ENCODE measurements at regions of chr3 and their contacts with region 1.

Region 1: GRCh38 chr3:186540221-186540834 is 3.9 kb downstream of the CRYGS start:
- DNase-seq: peak; percentile 90
- H3K4me3 Mint-ChIP-seq: no peak overlapping the region
- H3K27ac Mint-ChIP-seq: peak overlapping the region; percentile 25
- H3K4me1 Mint-ChIP-seq: peaks cover 57% of the 10 kb centered on the region
- H3K27me3 Mint-ChIP-seq: no peaks in the 10 kb centered on the region

Region 2: GRCh38 chr3:185983495-185984141 is 556.7 kb before region 1 on chr3:
- CTCF ChIA-PET with region 1: interaction called, 82 read pairs
- POLR2A ChIA-PET with region 1: no interaction called
- intact Hi-C with region 1: loop called (anchors 1 kb)
- DNase-seq: peak; percentile 64
- H3K4me3 Mint-ChIP-seq: no peak overlapping the region
- H3K27ac Mint-ChIP-seq: no peak overlapping the region
- H3K4me1 Mint-ChIP-seq: peaks cover 4% of the 10 kb centered on the region
- H3K27me3 Mint-ChIP-seq: peaks cover 11% of the 10 kb centered on the region

Region 3: GRCh38 chr3:186259612-186260383 is 280.5 kb before region 1 on chr3:
- CTCF ChIA-PET with region 1: interaction called, 170 read pairs
- POLR2A ChIA-PET with region 1: interaction called, 11 read pairs
- intact Hi-C with region 1: loop called (anchors 1 kb)
- DNase-seq: peak; percentile 85
- H3K4me3 Mint-ChIP-seq: peak overlapping the region; percentile 24
- H3K27ac Mint-ChIP-seq: peak overlapping the region; percentile 65
- H3K4me1 Mint-ChIP-seq: peaks cover 27% of the 10 kb centered on the region
- H3K27me3 Mint-ChIP-seq: peaks cover 6% of the 10 kb centered on the region

Region 4: DNA sequence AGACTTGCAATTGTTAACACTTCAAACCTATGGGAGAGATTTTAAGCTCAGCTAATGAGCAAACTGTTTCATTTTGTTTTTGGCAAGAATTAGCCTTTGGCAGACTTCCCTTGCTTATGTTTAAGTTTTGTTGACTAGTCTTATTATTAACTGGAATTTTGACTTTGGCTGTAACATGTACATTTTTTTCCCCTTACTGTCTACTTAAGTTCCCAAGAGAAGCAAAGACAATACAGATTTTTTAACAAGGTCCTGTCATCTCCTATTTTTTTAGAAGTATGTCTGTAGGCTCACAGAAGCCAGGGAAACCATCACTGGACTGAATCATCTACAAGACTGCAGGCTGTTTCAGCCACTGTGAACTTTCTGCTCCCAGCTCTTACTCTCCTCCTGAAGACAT is 252.6 kb before region 1 on chr3:
- CTCF ChIA-PET with region 1: no interaction called
- POLR2A ChIA-PET with region 1: no interaction called
- intact Hi-C with region 1: no loop called
- DNase-seq: no peak
- H3K4me3 Mint-ChIP-seq: no peak overlapping the region
- H3K27ac Mint-ChIP-seq: no peak overlapping the region
- H3K4me1 Mint-ChIP-seq: no peaks in the 10 kb centered on the region
- H3K27me3 Mint-ChIP-seq: peaks cover 6% of the 10 kb centered on the region

Region 5: DNA sequence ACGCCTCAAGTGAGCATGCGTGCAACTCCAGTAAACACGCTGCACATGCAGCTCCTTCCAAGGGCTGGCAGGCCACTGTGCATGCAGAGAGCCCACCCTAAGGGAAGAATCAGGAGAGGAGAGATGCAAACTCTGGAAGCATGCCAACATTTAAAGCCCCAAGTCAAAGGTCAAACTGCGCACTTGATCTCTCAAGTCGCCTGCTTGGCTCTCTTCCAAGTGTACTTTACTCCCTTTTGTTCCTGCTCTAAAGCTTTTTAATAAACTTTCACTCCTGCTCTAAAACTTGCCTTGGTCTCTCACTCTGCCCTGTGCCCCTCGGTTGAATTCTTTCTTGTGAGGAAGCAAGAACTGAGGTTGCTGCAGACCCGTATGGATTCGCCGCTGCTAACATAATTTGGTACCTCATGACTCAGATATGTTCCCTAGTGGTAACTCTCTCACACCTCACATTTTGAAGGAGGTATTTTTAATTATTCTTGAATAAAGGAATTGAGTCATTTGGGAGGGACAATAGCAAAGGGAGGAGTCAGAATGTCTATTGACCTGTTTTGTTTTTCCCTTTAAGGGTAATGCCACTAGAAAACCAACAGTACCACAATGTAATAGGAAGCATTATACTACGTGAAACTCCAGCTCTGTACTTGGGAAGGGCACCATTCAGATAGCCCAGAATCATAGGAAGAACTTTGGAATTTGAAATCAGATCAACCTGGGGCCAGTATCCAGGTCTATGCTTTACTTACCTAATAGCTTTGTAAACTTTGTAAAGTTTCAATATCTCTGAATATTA is 158.7 kb before region 1 on chr3:
- CTCF ChIA-PET with region 1: interaction called, 10 read pairs
- POLR2A ChIA-PET with region 1: no interaction called
- intact Hi-C with region 1: no loop called
- DNase-seq: no peak
- H3K4me3 Mint-ChIP-seq: no peak overlapping the region
- H3K27ac Mint-ChIP-seq: no peak overlapping the region
- H3K4me1 Mint-ChIP-seq: peaks cover 8% of the 10 kb centered on the region
- H3K27me3 Mint-ChIP-seq: peaks cover 7% of the 10 kb centered on the region

Region 6: DNA sequence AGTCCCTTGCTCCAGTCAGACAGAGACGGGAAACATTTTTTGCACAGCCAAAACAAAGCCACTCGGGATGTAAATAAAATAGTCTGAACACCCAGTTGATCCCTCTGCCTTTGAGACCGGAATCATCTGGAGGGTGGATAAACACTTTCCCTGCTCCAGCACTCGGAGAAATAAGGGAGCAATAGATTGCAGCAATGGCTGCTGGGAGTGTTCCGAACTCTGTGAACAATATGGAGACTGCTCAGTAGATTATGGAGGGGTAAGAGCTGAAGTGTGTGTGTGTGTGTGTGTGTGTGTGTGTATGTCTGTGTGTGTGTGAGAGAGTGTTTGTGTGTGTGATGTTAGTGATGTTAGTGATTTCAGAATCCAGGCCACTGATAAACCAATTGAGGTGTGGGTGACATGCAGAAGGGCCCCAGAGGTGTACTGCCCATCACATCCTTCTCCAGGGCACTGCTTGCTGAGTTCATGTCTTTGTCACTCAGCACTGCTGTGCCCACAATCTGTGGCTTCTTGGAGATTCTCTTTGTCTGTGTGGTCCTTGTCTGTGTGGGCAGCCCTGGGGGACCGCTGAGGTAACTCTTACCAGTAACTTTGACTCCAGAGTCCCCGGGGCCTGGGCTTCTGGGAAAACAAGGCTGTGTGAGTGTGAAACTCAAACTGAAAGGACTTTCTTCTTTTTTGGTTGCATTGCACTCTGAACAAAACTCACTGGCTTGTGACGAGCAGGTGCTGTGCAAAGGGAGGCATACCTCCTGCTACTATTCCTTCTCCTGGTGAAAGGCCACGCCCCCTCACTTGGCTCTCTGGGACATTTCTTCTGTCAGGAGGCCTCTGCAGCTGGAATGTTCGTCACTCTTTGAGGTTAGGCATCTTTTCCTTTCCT is 19.1 kb before region 1 on chr3:
- CTCF ChIA-PET with region 1: interaction called, 50 read pairs
- POLR2A ChIA-PET with region 1: interaction called, 39 read pairs
- intact Hi-C with region 1: no loop called
- DNase-seq: peak; percentile 88
- H3K4me3 Mint-ChIP-seq: peak overlapping the region; percentile 50
- H3K27ac Mint-ChIP-seq: peak overlapping the region; percentile 81
- H3K4me1 Mint-ChIP-seq: peaks cover 62% of the 10 kb centered on the region
- H3K27me3 Mint-ChIP-seq: no peaks in the 10 kb centered on the region

Region 7: GRCh38 chr3:186871403-186871924 is 331.1 kb after region 1 on chr3:
- CTCF ChIA-PET with region 1: no interaction called
- POLR2A ChIA-PET with region 1: no interaction called
- intact Hi-C with region 1: no loop called
- DNase-seq: no peak
- H3K4me3 Mint-ChIP-seq: no peak overlapping the region
- H3K27ac Mint-ChIP-seq: peak overlapping the region; percentile 70
- H3K4me1 Mint-ChIP-seq: peaks cover 35% of the 10 kb centered on the region
- H3K27me3 Mint-ChIP-seq: no peaks in the 10 kb centered on the region

Measured in activated CD4-positive, alpha-beta memory T cell treated with anti-CD3 and anti-CD28 coated beads for 36 hours (primary cell).